CD8-positive, alpha-beta T cell (primary cell): ENCODE measurements at regions of chr2 and their contacts with region 1.

Region 1: GRCh38 chr2:74178201-74179062 is at the start of gene MOB1A:
- DNase-seq: peak; percentile 96 to 99 (median 98)
- ATAC-seq: peak; percentile 95
- H3K4me3 ChIP-seq: peak within 1 kb of the TSS; percentile 79 to 93
- H3K4me3 Mint-ChIP-seq: peak within 1 kb of the TSS; percentile 92
- H3K27ac ChIP-seq: peak within 1 kb of the TSS; percentile 95
- H3K27ac Mint-ChIP-seq: peak within 1 kb of the TSS; percentile 92
- H3K4me1 ChIP-seq: peaks cover 40% of the 10 kb centered on the region
- H3K4me1 Mint-ChIP-seq: peaks cover 36% of the 10 kb centered on the region
- H3K27me3 ChIP-seq: no peaks in the 10 kb centered on the region
- H3K27me3 Mint-ChIP-seq: no peaks in the 10 kb centered on the region
- CTCF ChIP-seq: no peak
- total RNA-seq, gene MOB1A: 181 to 197 TPM

Region 2: GRCh38 chr2:73926493-73927338 is 251.7 kb before region 1 on chr2 and contains the start of gene DGUOK:
- CTCF ChIA-PET with region 1: no interaction called
- POLR2A ChIA-PET with region 1: interaction called, 3 read pairs
- intact Hi-C with region 1: loop called (anchors 1 to 2 kb)
- DNase-seq: peak; percentile 90 to 100 (median 96)
- ATAC-seq: peak; percentile 96
- H3K4me3 ChIP-seq: peak within 1 kb of the TSS; percentile 70 to 72
- H3K4me3 Mint-ChIP-seq: peak within 1 kb of the TSS; percentile 88
- H3K27ac ChIP-seq: peak within 1 kb of the TSS; percentile 94
- H3K27ac Mint-ChIP-seq: peak within 1 kb of the TSS; percentile 99
- H3K4me1 ChIP-seq: peaks cover 45% of the 10 kb centered on the region
- H3K4me1 Mint-ChIP-seq: peaks cover 52% of the 10 kb centered on the region
- H3K27me3 ChIP-seq: no peaks in the 10 kb centered on the region
- H3K27me3 Mint-ChIP-seq: no peaks in the 10 kb centered on the region
- CTCF ChIP-seq: no peak
- total RNA-seq, gene DGUOK: 29.0 to 31.8 TPM

Region 3: GRCh38 chr2:74147727-74148456 is 30.5 kb before region 1 on chr2 and contains the start of gene BOLA3:
- CTCF ChIA-PET with region 1: interaction called, 4 read pairs
- POLR2A ChIA-PET with region 1: interaction called, 34 read pairs
- intact Hi-C with region 1: loop called (anchors 2 kb)
- DNase-seq: peak; percentile 58 to 90 (median 82)
- ATAC-seq: peak; percentile 90
- H3K4me3 ChIP-seq: peak within 1 kb of the TSS; percentile 51 to 73
- H3K4me3 Mint-ChIP-seq: no peak within 1 kb of the TSS
- H3K27ac ChIP-seq: peak within 1 kb of the TSS; percentile 21 to 66
- H3K27ac Mint-ChIP-seq: no peak within 1 kb of the TSS
- H3K4me1 ChIP-seq: peaks cover 12% of the 10 kb centered on the region
- H3K4me1 Mint-ChIP-seq: peaks cover 4% of the 10 kb centered on the region
- H3K27me3 ChIP-seq: no peaks in the 10 kb centered on the region
- H3K27me3 Mint-ChIP-seq: no peaks in the 10 kb centered on the region
- CTCF ChIP-seq: peak; percentile 66
- total RNA-seq, gene BOLA3: 9.9 to 10.1 TPM

Region 4: GRCh38 chr2:74198461-74199274 is 20.2 kb after region 1 on chr2 and contains the start of gene MTHFD2:
- CTCF ChIA-PET with region 1: interaction called, 8 read pairs
- POLR2A ChIA-PET with region 1: interaction called, 41 read pairs
- intact Hi-C with region 1: loop called (anchors 1 kb)
- DNase-seq: peak; percentile 74 to 93 (median 88)
- ATAC-seq: peak; percentile 82
- H3K4me3 ChIP-seq: peak within 1 kb of the TSS; percentile 78 to 86
- H3K4me3 Mint-ChIP-seq: peak within 1 kb of the TSS; percentile 98
- H3K27ac ChIP-seq: peak within 1 kb of the TSS; percentile 87 to 89
- H3K27ac Mint-ChIP-seq: peak within 1 kb of the TSS; percentile 99
- H3K4me1 ChIP-seq: peaks cover 17% of the 10 kb centered on the region
- H3K4me1 Mint-ChIP-seq: peaks cover 25% of the 10 kb centered on the region
- H3K27me3 ChIP-seq: no peaks in the 10 kb centered on the region
- H3K27me3 Mint-ChIP-seq: no peaks in the 10 kb centered on the region
- CTCF ChIP-seq: peak; percentile 77
- total RNA-seq, gene MTHFD2: 25.8 to 26.7 TPM

Region 5: GRCh38 chr2:74278176-74278575 is 99.7 kb after region 1 on chr2:
- CTCF ChIA-PET with region 1: no interaction called
- POLR2A ChIA-PET with region 1: no interaction called
- intact Hi-C with region 1: no loop called
- DNase-seq: no peak
- ATAC-seq: no peak
- H3K4me3 ChIP-seq: no peak overlapping the region
- H3K4me3 Mint-ChIP-seq: no peak overlapping the region
- H3K27ac ChIP-seq: no peak overlapping the region
- H3K27ac Mint-ChIP-seq: no peak overlapping the region
- H3K4me1 ChIP-seq: no peaks in the 10 kb centered on the region
- H3K4me1 Mint-ChIP-seq: no peaks in the 10 kb centered on the region
- H3K27me3 ChIP-seq: no peaks in the 10 kb centered on the region
- H3K27me3 Mint-ChIP-seq: no peaks in the 10 kb centered on the region
- CTCF ChIP-seq: no peak

Region 6: DNA sequence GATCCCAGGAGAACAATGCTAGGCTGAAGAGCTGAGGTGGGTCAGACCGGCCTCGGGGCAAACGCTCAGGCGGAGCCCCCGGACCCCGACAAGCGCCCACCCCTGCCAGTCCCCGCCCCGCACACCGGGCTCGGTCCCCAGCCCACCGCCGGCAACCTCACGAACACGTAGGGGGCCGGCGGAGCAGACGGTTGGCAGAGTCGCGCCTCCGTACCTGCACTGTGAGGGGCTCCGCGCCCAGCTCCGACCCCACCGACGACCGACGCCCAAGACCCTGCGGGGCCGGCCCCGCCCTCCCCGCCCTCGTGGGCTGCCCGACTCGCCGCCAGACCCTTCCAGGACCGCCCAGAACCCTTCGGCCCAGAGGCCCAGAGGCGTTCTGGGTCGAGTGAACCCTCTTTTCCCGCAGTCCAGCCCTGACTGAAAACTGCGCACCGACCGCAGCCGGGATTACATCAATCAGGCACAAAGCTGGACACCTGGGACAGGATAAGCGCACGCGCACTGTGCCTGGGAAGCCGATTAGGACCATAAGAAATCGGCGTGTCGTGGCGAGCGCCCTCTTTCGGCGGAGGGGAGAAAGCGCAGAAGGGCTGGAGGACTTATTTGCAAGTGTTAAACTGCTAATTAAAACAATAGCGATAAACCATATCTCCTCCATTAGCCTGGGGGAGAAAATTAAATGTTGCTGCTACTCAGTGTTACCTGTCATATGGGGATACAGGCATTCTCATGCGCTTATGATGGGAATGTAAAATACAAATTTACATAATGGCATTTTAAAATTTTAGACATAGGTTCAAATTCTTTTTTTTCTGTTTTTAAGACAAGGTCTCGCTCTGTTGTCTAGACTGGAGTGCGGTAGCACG is 213.4 kb after region 1 on chr2:
- CTCF ChIA-PET with region 1: no interaction called
- POLR2A ChIA-PET with region 1: no interaction called
- intact Hi-C with region 1: loop called in 1 of 2 experiments (anchors 1 kb)
- DNase-seq: peak; percentile 91 to 98 (median 95)
- ATAC-seq: peak; percentile 90
- H3K4me3 ChIP-seq: peak overlapping the region; percentile 67 to 87
- H3K4me3 Mint-ChIP-seq: peak overlapping the region; percentile 99
- H3K27ac ChIP-seq: peak overlapping the region; percentile 87 to 96
- H3K27ac Mint-ChIP-seq: peak overlapping the region; percentile 100
- H3K4me1 ChIP-seq: peaks cover 20% of the 10 kb centered on the region
- H3K4me1 Mint-ChIP-seq: peaks cover 9% of the 10 kb centered on the region
- H3K27me3 ChIP-seq: no peaks in the 10 kb centered on the region
- H3K27me3 Mint-ChIP-seq: no peaks in the 10 kb centered on the region
- CTCF ChIP-seq: peak; percentile 96

Region 7: GRCh38 chr2:74458132-74458925 is 279.9 kb after region 1 on chr2 and contains the start of gene WBP1:
- CTCF ChIA-PET with region 1: no interaction called
- POLR2A ChIA-PET with region 1: no interaction called
- intact Hi-C with region 1: loop called in 1 of 2 experiments (anchors 1 kb)
- DNase-seq: peak; percentile 96 to 100 (median 98)
- ATAC-seq: peak; percentile 77
- H3K4me3 ChIP-seq: peak within 1 kb of the TSS; percentile 84 to 95
- H3K4me3 Mint-ChIP-seq: peak within 1 kb of the TSS; percentile 97
- H3K27ac ChIP-seq: peak within 1 kb of the TSS; percentile 93 to 100
- H3K27ac Mint-ChIP-seq: peak within 1 kb of the TSS; percentile 99
- H3K4me1 ChIP-seq: peaks cover 34% of the 10 kb centered on the region
- H3K4me1 Mint-ChIP-seq: peaks cover 57% of the 10 kb centered on the region
- H3K27me3 ChIP-seq: no peaks in the 10 kb centered on the region
- H3K27me3 Mint-ChIP-seq: no peaks in the 10 kb centered on the region
- CTCF ChIP-seq: no peak
- total RNA-seq, gene WBP1: 68.5 to 70.6 TPM